ENCODE measurements at regions of chr10 and their contacts with region 1.

Region 1: DNA sequence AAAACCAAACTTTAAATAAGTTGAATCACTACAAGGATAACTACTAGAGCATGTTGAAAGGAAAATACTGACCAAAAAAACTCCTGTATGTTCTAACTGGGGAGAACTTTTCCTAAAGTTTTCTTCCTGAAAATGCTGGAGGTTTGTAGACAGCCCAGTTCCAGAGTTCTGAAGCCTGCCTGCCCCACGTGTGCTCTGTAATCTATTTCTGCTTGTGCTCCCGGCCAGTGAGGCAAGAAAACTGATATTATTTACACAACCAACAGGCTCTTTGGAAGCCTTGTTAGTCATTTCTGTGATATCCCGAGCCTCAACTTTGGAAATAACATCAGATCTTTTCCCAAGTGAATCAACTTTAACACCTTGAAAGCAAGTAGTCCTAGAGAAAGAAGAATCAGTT is 46.7 kb downstream of the ZFAND4 start:
- DNase-seq: no peak
- ATAC-seq: peak in 1 of 2 donors; percentile 38

Region 2: DNA sequence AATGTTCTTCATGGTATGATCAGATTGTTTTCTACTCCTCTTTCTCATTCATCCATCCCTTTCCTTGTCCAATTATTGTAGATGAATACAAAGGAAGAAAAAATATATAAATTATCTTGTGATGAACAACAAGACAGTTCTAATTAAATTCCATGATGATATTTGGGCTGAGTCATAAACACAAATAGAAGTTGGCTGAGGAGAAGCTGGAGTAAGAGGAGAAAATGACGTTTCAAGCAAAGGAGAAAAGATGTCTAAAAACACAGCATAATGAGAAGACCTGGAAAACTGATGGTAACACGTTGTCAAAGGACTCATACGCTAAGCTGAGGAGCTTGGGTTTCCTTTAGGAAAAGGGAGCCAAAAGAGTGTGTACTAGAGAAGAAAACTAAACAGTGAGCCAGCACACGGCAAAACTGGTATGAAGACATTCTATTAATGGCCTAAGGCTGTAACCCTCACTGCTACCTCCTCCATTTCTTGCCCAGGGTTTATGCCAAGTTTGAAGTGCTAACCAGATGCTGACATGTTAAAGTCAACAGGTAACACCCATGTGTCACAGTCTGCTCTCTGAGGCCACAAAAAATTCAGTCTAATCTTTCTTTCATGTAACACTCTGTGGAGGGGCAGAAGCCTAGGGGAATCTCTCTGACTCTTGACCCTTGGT is 20.6 kb after region 1 on chr10:
- intact Hi-C with region 1: loop called in 1 of 2 experiments (anchors 1 kb)
- DNase-seq: no peak
- ATAC-seq: peak; percentile 23 to 50

Measured in left cardiac atrium (tissue), 4 donors.